ENCODE measurements at regions of chr16 and their contacts with region 1.

Region 1: DNA sequence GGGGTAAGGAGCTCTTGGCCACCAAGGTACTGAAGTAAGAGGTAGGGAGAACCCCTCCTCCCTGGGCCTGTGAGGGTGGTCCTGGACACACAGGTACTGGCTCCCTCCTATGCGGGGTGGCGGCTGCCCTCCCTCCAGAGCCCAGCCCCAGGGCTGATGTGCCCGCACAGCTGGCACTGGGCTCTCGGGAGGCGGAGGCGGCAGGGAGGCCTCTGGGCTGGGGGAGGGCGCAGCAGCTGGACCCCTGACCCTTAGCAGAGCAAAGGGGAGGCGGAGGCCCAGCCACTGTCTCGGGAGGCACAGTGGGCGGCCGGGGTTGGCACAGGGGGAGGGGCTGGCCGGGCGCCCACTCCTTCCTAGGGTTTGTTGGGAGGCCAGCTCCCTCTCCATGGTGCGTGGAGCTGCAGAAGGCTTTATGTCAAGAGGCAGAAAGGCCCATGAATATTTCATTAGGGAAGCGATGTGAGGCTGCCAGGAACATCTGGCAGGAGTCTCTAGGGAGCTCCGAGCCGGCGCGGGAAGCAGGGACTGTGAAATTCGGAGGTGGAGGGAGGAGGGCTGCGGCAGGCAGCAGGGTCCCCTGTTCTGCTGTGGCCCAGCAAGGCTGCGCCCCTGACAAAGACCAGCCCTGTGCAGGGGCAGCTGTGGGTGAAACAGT is 44.1 kb upstream of the ACSF3 start:
- DNase-seq: no peak
- ATAC-seq: no peak
- H3K4me3 ChIP-seq: no peak overlapping the region
- H3K27ac ChIP-seq: no peak overlapping the region
- H3K4me1 ChIP-seq: peaks cover 0 to 74% of the 10 kb centered on the region in 2 experiments; a peak in 3 of 5 replicates
- H3K27me3 ChIP-seq: peaks cover 19 to 48% of the 10 kb centered on the region in 2 experiments
- CTCF ChIP-seq: no peak
- EP300 ChIP-seq: no peak
- POLR2A ChIP-seq: no peak
- RAD21 ChIP-seq: no peak

Region 2: GRCh38 chr16:89004209-89004831 is 45.3 kb before region 1 on chr16:
- CTCF ChIA-PET with region 1: no interaction called
- POLR2A ChIA-PET with region 1: interaction called, 3 read pairs
- in situ Hi-C with region 1: loop called (anchors 5 kb)
- intact Hi-C with region 1: loop called (anchors 5 kb)
- DNase-seq: peak; percentile 95 to 99 (median 96)
- ATAC-seq: peak; percentile 91
- H3K4me3 ChIP-seq: no peak overlapping the region
- H3K27ac ChIP-seq: peak overlapping the region; percentile 69
- H3K4me1 ChIP-seq: peaks cover 25 to 67% of the 10 kb centered on the region in 2 experiments
- H3K27me3 ChIP-seq: no peaks in the 10 kb centered on the region
- CTCF ChIP-seq: peak in 2 of 3 experiments; percentile 5 to 11; a peak in 1 of 6 replicates
- EP300 ChIP-seq: peak; percentile 99
- POLR2A ChIP-seq: no peak
- RAD21 ChIP-seq: peak; percentile 38 to 44

Region 3: GRCh38 chr16:89020068-89020924 is 29.3 kb before region 1 on chr16:
- CTCF ChIA-PET with region 1: no interaction called
- POLR2A ChIA-PET with region 1: interaction called, 10 read pairs
- in situ Hi-C with region 1: no loop called
- intact Hi-C with region 1: no loop called
- DNase-seq: peak; percentile 81 to 90 (median 84)
- ATAC-seq: peak; percentile 90
- H3K4me3 ChIP-seq: peak overlapping the region; percentile 36
- H3K27ac ChIP-seq: peak overlapping the region; percentile 55
- H3K4me1 ChIP-seq: peaks cover 20 to 69% of the 10 kb centered on the region in 2 experiments
- H3K27me3 ChIP-seq: no peaks in the 10 kb centered on the region
- CTCF ChIP-seq: no peak
- EP300 ChIP-seq: peak; percentile 81
- POLR2A ChIP-seq: no peak
- RAD21 ChIP-seq: 0 out of 4 replicates have a peak, but pooled peaks of 1 of the 2 experiments have one; percentile 18

Measured in K562 (cell line).